ENCODE measurements at regions of chr7 and their contacts with region 1.

Region 1: DNA sequence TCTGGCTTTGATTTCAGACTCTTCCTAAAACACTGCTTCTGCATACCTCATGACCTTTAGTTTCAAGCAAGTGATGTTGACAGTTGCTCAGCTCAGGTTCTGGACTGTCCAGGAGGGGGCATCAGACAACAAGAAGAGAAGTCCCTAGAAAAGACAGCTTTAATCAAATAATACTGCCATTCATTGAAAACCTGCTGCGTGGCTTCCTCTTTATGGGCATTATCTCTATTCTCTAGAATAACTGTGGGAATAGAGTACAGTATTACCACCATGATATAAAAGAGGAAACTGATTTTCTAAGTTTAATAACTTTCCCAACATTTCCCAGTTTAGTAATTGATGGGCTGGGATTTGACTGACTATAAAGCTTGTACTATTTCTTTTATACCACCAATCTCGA is 170.4 kb downstream of the SNX13 start:
- DNase-seq: peak; percentile 69
- ATAC-seq: peak; percentile 83
- H3K4me3 ChIP-seq: no peak overlapping the region
- H3K27ac ChIP-seq: no peak overlapping the region
- H3K4me1 ChIP-seq: peaks cover 20% of the 10 kb centered on the region
- H3K27me3 ChIP-seq: no peaks in the 10 kb centered on the region
- CTCF ChIP-seq: peak; percentile 83
- EP300 ChIP-seq: no peak
- POLR2A ChIP-seq: no peak
- RAD21 ChIP-seq: peak; percentile 79

Region 2: DNA sequence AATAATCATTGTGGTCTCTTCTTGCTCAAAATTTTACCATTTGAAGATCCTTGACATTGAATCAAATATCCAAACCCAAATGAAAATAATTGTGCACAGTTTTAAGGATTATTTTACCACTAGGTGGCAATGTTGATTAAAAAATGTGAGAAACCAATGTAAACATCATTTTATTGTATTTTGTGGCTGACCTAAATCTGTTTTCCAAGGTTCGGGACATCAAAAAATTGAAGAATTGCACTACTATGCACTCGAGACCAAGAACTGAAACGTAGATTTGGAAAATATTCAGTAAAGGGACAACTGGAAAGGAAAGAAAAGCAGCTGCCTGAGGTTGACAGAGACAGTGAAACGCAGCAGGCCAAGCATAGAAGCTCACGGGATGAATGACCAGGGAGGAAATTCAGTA is 89.0 kb before region 1 on chr7:
- CTCF ChIA-PET with region 1: no interaction called
- POLR2A ChIA-PET with region 1: no interaction called
- in situ Hi-C with region 1: no loop called
- intact Hi-C with region 1: loop called (anchors 1 kb)
- DNase-seq: peak; percentile 11
- ATAC-seq: peak; percentile 27; the same call in 1 of the 3 replicates
- H3K4me3 ChIP-seq: no peak overlapping the region
- H3K27ac ChIP-seq: no peak overlapping the region
- H3K4me1 ChIP-seq: no peaks in the 10 kb centered on the region
- H3K27me3 ChIP-seq: no peaks in the 10 kb centered on the region
- CTCF ChIP-seq: peak; percentile 56
- EP300 ChIP-seq: no peak
- POLR2A ChIP-seq: no peak
- RAD21 ChIP-seq: no peak

Region 3: GRCh38 chr7:17741426-17741825 is 28.5 kb before region 1 on chr7:
- CTCF ChIA-PET with region 1: no interaction called
- POLR2A ChIA-PET with region 1: no interaction called
- in situ Hi-C with region 1: no loop called
- intact Hi-C with region 1: no loop called
- DNase-seq: no peak
- ATAC-seq: no peak
- H3K4me3 ChIP-seq: no peak overlapping the region
- H3K27ac ChIP-seq: no peak overlapping the region
- H3K4me1 ChIP-seq: no peaks in the 10 kb centered on the region
- H3K27me3 ChIP-seq: no peaks in the 10 kb centered on the region
- CTCF ChIP-seq: no peak
- EP300 ChIP-seq: no peak
- POLR2A ChIP-seq: no peak
- RAD21 ChIP-seq: no peak

Region 4: DNA sequence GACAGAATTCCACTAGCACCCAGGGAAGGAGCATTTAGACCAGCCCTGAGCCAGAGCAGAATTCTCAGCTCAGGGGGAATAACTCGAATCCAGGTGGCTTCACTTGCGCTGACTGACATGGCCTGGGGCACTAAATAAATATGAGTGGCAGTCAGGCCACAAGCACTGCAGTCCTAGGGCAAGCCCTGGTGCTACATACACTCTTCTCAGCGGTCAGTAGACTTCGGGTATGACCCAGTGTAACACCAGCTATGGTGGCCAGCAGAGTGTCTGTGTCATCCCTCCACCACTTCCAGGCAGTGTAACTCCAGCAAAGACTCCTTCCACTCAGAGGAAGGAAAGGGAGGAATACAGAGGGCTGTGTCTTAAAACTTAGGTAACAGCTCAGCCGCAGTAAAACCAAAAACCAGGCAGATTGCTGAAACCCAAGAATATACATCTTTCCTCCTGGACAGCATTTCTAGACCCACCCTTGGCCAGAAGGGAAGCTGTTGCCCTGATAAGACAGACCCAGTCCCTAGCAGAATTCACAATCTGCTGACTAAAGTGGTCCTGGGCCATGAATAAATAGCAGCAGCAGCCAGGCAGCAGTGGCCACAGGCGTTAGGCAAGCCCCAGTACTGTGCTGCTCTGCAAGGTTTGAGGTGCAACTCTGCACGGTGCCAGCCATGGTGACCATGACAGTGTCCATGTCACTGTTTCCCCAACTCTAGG is 93.3 kb after region 1 on chr7:
- CTCF ChIA-PET with region 1: no interaction called
- POLR2A ChIA-PET with region 1: no interaction called
- in situ Hi-C with region 1: no loop called
- intact Hi-C with region 1: loop called (anchors 10 kb)
- DNase-seq: no peak
- ATAC-seq: peak; percentile 38; the same call in 2 of the 3 replicates
- H3K4me3 ChIP-seq: no peak overlapping the region
- H3K27ac ChIP-seq: no peak overlapping the region
- H3K4me1 ChIP-seq: no peaks in the 10 kb centered on the region
- H3K27me3 ChIP-seq: no peaks in the 10 kb centered on the region
- CTCF ChIP-seq: no peak
- EP300 ChIP-seq: no peak
- POLR2A ChIP-seq: no peak
- RAD21 ChIP-seq: no peak

Region 5: DNA sequence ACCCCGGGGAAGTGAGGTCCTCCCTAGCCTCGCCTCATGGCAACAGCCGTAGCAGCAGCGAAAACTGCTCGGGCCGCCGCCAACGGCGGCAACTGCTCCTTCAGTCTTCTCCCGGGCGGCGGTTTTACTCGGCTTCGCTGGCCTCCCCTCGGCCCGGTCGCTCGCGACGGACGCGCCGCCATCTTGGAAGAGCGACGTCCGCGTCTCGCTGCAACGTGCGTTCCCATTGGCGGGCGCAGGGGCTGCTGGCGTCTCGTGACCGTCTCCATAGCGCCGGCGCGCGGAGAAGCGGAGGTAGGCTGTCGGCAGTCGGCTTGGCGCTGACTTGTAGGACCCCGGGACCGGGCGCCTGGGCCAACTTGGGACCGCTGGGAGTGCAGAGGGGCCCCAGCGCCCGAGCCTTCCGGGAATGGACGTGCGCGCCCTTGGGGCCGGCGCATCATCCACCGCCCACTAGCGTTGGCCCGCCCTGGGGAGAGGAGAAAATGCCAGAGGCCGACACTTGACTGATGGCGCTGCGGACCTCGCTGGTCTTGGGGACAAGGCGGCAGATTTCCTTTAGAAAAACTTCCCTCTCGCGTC is 170.5 kb after region 1 on chr7 and contains the start of gene SNX13:
- CTCF ChIA-PET with region 1: interaction called, 3 read pairs
- POLR2A ChIA-PET with region 1: no interaction called
- in situ Hi-C with region 1: no loop called
- intact Hi-C with region 1: loop called (anchors 1 kb)
- DNase-seq: peak; percentile 87
- ATAC-seq: peak; percentile 97
- H3K4me3 ChIP-seq: peak within 1 kb of the TSS; percentile 64 to 97 (median 86)
- H3K27ac ChIP-seq: peak within 1 kb of the TSS; percentile 92
- H3K4me1 ChIP-seq: peaks cover 38% of the 10 kb centered on the region
- H3K27me3 ChIP-seq: no peaks in the 10 kb centered on the region; a peak in 1 of 5 replicates
- CTCF ChIP-seq: peak; percentile 81
- EP300 ChIP-seq: peak in 1 of 2 experiments; percentile 16; a peak in 1 of 4 replicates
- POLR2A ChIP-seq: peak; percentile 70 to 81
- RAD21 ChIP-seq: peak; percentile 68
- total RNA-seq, gene SNX13: 32.3 and 35.7 TPM in 2 replicates

Region 6: DNA sequence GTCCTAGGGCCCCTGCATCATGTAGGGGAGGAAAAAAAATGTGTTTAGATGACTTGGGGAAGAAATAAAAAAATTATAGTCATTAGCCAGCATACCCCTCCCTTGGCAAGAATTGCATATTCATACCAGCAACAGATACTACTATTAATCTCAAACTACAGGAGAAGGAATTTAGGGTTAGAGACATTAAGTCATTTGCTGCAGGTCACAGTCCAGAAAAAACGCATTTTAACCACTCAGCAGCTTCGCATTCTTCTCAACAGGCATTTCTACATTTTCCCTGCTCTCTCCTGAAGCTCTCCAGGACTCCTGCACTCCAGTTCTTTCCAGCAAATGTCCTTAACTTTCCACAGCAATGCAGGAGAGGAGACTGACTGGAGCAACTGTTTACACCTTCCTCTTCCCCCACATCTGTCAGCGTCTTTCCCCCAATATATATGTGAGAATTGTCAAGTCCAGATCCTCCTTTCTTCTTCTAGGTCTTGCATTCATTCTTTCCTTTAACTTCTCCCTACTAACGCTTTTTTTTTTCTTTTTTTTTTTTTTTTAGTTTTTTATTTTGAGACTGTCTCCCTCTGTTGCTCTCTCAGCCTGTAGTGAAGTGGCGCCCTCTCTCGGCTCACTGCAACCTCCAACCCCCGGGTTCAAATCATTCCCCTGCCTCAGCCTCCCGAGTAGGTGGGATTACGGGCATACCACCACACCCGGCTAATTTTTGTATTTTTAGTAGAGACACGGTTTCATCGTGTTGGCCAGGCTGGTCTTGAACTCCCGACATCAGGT is 222.1 kb after region 1 on chr7:
- CTCF ChIA-PET with region 1: interaction called, 3 read pairs
- POLR2A ChIA-PET with region 1: no interaction called
- in situ Hi-C with region 1: no loop called
- intact Hi-C with region 1: loop called (anchors 1 kb)
- DNase-seq: no peak
- ATAC-seq: peak; percentile 62
- H3K4me3 ChIP-seq: no peak overlapping the region
- H3K27ac ChIP-seq: no peak overlapping the region
- H3K4me1 ChIP-seq: no peaks in the 10 kb centered on the region
- H3K27me3 ChIP-seq: no peaks in the 10 kb centered on the region
- CTCF ChIP-seq: peak; percentile 32; the same call in 1 of the 2 replicates
- EP300 ChIP-seq: no peak
- POLR2A ChIP-seq: no peak
- RAD21 ChIP-seq: no peak

Region 7: GRCh38 chr7:18320971-18321567 is 551.2 kb after region 1 on chr7:
- CTCF ChIA-PET with region 1: no interaction called
- POLR2A ChIA-PET with region 1: no interaction called
- in situ Hi-C with region 1: loop called (anchors 10 kb)
- intact Hi-C with region 1: loop called (anchors 2 kb)
- DNase-seq: peak; percentile 23
- ATAC-seq: peak; percentile 68
- H3K4me3 ChIP-seq: no peak overlapping the region
- H3K27ac ChIP-seq: no peak overlapping the region
- H3K4me1 ChIP-seq: no peaks in the 10 kb centered on the region
- H3K27me3 ChIP-seq: no peaks in the 10 kb centered on the region
- CTCF ChIP-seq: peak; percentile 50
- EP300 ChIP-seq: no peak
- POLR2A ChIP-seq: no peak
- RAD21 ChIP-seq: no peak

Region 8: GRCh38 chr7:18345641-18346234 is 575.8 kb after region 1 on chr7:
- CTCF ChIA-PET with region 1: interaction called, 9 read pairs
- POLR2A ChIA-PET with region 1: no interaction called
- in situ Hi-C with region 1: no loop called
- intact Hi-C with region 1: loop called (anchors 1 kb)
- DNase-seq: peak; percentile 35
- ATAC-seq: peak; percentile 73
- H3K4me3 ChIP-seq: no peak overlapping the region
- H3K27ac ChIP-seq: no peak overlapping the region
- H3K4me1 ChIP-seq: no peaks in the 10 kb centered on the region
- H3K27me3 ChIP-seq: no peaks in the 10 kb centered on the region
- CTCF ChIP-seq: peak; percentile 70
- EP300 ChIP-seq: no peak
- POLR2A ChIP-seq: no peak
- RAD21 ChIP-seq: peak; percentile 22; the same call in 1 of the 2 replicates

Region 9: GRCh38 chr7:18610331-18610948 is 840.5 kb after region 1 on chr7:
- CTCF ChIA-PET with region 1: no interaction called
- POLR2A ChIA-PET with region 1: no interaction called
- in situ Hi-C with region 1: no loop called
- intact Hi-C with region 1: no loop called
- DNase-seq: peak; percentile 27
- ATAC-seq: peak; percentile 70
- H3K4me3 ChIP-seq: no peak overlapping the region
- H3K27ac ChIP-seq: no peak overlapping the region
- H3K4me1 ChIP-seq: no peaks in the 10 kb centered on the region
- H3K27me3 ChIP-seq: no peaks in the 10 kb centered on the region
- CTCF ChIP-seq: peak; percentile 60
- EP300 ChIP-seq: no peak
- POLR2A ChIP-seq: no peak
- RAD21 ChIP-seq: no peak

Measured in HepG2 (cell line).